ENCODE measurements at regions of chr9 and their contacts with region 1.

Region 1: DNA sequence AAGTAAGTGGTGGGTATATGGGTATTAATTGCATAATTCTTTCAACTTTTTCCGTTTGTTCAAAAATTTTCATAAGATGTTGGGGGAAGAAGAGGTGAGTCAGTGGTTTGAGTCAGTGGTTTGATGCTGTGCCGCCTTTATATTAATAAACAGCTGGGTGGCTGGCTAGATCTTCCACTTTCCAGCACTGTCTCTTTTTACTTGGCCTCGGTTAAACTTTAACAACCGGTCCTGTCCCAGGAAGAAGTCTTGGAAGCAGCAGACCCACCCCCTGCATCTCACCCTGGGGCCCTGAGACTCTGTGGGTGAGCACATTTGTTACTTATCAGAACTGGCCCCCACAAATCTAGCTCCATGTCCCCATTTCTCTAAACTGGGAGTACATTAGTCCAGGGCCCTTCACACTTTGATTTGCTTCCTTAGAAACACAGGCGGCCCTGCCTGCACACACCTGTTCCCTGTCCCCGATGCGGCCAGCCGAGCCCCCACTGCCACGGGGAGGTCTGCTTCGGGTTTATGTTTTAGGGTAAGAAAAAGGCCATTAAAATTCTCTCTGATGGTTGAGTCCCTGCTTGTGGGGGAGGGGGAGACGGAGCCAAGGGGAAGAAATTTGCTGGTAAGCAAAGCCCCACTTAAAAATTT is 90.7 kb downstream of the PTCH1 start:
- DNase-seq: no peak
- ATAC-seq: peak; percentile 36 to 46
- H3K4me3 ChIP-seq: peak overlapping the region; percentile 46 to 74 (median 56)
- H3K27ac ChIP-seq: peak overlapping the region; percentile 73 to 87 (median 80)
- H3K4me1 ChIP-seq: peaks cover 0 to 7% of the 10 kb centered on the region in 2 donors
- H3K27me3 ChIP-seq: no peaks in the 10 kb centered on the region
- CTCF ChIP-seq: no peak
- POLR2A ChIP-seq: no peak

Region 2: DNA sequence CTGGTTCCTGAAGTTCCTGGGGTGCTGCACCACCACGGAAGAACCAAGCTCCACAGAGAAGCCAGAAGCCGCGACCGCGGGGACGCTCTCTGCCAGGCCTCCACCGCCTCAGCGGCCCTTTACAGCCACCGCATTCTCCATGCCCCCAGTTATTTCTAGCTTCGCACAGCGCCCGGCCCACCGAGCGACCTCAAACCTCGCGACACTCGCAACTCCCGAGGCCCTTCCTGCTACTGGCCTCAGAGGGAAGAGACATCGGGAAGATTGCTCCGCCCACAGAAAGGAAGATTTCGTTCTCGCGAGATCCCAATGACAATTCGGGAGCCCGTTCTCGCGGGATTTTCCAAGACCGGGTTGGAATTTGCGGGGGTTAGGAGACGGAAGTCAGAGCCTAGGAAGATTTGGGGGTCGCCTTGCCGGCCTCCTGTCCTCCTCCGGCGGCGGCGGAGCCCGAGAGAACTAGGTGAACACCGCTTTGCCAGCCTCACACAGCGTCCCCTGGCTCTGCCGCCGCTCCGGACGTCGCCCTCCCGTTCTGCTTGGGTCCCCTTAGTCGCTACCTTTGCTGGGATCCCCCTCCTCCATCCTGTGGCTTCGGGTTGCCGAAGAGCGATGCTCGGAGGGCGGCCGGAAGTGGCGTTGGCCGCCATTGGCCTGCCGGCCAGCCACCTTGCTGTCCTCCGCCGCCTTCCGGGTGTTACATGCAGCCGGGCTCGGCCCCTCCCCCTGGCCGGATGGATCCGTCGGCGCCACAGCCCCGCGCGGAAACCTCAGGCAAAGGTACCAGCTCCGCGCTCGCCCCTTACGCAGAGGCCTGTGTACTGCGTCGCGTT is 449.5 kb after region 1 on chr9 and contains the start of gene ERCC6L2:
- in situ Hi-C with region 1: no loop called
- intact Hi-C with region 1: loop called (anchors 10 kb)
- DNase-seq: peak; percentile 90 to 95
- ATAC-seq: peak; percentile 95 to 97
- H3K4me3 ChIP-seq: no peak within 1 kb of the TSS
- H3K27ac ChIP-seq: no peak within 1 kb of the TSS
- H3K4me1 ChIP-seq: peaks cover 11 to 19% of the 10 kb centered on the region in 2 donors
- H3K27me3 ChIP-seq: no peaks in the 10 kb centered on the region
- CTCF ChIP-seq: no peak
- POLR2A ChIP-seq: peak; percentile 50 to 69
- total RNA-seq, gene ERCC6L2: 24.2 to 46.2 (median 35.9) TPM

Region 3: DNA sequence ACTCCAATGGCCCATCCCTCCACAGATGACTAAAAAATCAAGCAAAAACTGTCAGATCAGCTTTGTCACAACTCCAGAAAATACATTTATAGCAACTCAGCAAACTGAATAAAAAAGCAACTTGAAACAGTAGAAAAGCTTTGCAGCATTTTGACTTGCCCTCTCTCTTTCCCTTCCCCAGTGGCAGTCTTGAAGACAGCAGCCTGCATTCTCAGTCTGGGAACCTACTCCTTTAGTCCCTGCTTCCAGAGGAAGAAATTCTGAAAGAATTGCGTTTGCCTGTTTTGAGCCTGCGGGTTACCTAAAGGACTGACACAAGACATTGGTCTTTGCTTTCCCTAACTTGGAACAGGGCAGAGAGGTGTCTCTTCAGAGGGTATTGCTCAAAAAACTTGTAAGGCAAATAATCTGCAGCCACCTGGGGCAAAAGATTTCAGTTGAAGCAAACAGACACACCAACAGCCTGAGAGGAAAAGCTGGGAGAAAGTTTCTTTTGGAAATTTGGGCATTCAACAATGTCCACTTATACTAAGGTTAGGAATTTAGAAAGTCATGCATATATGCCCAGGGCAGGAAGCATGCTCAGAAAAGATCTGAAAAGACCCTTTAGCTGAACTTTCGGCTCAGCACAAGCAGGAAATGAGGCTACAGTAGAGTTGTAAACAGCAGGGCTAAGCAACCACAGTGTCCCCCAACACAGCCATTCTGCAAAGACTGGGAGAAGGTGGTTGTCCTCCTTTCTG is 972.7 kb after region 1 on chr9:
- in situ Hi-C with region 1: no loop called
- intact Hi-C with region 1: no loop called
- DNase-seq: no peak
- ATAC-seq: no peak
- H3K4me3 ChIP-seq: no peak overlapping the region
- H3K27ac ChIP-seq: no peak overlapping the region
- H3K4me1 ChIP-seq: no peaks in the 10 kb centered on the region
- H3K27me3 ChIP-seq: no peaks in the 10 kb centered on the region
- CTCF ChIP-seq: no peak
- POLR2A ChIP-seq: no peak

Measured in gastrocnemius medialis (tissue), 4 donors.